Transverse colon (tissue), 4 donors: ENCODE measurements at regions of chr16 and their contacts with region 1.

Region 1: DNA sequence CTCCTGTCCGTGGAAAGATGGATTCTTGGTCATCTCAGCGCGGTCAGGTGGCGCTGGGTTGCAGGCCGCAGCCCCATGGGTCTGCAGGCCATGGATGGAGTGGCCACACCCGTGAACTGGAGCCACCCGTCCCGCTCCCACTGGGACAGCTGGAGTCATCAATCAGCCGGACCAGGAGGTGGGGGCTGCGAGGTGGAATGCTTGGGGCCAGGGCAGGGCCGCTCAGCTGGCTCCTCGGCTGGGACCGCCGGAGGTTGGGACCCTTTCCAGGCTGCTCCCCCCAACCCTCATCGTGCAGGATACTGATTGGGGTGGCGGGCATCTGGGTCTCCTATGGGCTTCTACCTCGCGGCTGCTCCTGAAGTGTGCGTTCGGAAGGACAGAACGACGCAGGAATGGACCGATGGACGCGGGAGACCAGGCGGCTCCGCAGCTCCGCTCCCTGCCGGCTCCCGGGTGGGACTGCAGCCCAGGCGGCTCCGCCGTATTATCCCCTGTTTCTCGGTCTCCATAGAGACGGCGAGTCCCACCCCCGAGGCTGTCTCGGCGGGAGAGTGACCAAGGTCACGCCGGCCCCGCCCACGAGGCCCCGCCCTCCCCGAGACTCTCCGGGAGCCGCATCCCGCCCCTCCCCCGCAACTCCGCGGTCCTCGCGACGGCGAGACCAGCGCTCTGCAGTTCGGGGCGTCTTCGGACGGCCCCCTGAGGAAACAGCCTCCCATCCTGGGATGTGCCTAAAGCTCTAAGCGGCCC is at the start of gene TPPP3:
- DNase-seq: peak; percentile 90
- H3K4me3 ChIP-seq: peak within 1 kb of the TSS in 3 of 4 donors; percentile 11 to 40 (median 31)
- H3K27ac ChIP-seq: peak within 1 kb of the TSS; percentile 64 to 77 (median 74)
- H3K4me1 ChIP-seq: peaks cover 32 to 64% (median 46%) of the 10 kb centered on the region in 4 donors
- H3K27me3 ChIP-seq: no peaks in the 10 kb centered on the region
- CTCF ChIP-seq: peak; percentile 69 to 91 (median 80)
- EP300 ChIP-seq: peak; percentile 36
- POLR2A ChIP-seq: peak; percentile 10
- total RNA-seq, gene TPPP3: 3.5 to 20.9 (median 5.7) TPM in 3 of 4 donors, not detected in the other

Region 2: DNA sequence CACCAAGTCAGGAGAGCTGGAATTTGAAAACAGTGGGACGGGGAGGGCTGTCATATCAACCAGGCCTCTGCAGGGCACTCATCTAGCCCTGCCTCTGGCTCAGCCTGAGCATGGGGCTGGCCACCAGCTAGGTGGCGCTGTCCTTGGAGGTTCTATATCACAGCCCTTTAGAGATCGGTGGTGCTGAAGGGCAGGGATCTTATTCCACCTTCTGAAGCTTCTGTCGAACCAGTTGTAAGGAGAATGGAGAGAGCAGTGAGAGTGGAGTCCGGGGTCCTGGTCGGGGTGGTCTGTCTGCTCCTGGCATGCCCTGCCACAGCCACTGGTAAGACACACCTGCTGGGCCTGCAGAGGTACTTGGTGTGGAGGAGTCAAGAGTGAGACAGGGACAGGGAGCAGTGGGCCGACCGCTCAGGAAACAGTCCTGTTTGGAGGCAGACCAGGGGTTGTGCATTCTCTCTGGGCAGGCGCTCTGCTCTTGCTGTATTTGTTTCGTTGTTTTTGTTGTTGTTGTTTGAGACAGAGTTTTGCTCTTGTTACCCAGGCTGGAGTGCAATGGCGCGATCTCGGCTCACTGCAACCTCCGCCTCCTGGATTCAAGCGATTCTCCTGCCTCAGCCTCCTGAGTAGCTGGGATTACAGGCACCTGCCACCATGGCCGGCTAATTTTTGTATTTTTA is 432.0 kb before region 1 on chr16 and contains the start of gene CES3:
- in situ Hi-C with region 1: loop called in 1 of 4 experiments (anchors 25 kb)
- intact Hi-C with region 1: no loop called
- DNase-seq: peak; percentile 89
- H3K4me3 ChIP-seq: peak within 1 kb of the TSS in 3 of 4 donors; percentile 25 to 45 (median 33)
- H3K27ac ChIP-seq: peak within 1 kb of the TSS; percentile 81 to 88 (median 82)
- H3K4me1 ChIP-seq: peaks cover 0 to 53% (median 31%) of the 10 kb centered on the region in 4 donors
- H3K27me3 ChIP-seq: no peaks in the 10 kb centered on the region
- CTCF ChIP-seq: peak; percentile 58 to 93 (median 78)
- EP300 ChIP-seq: no peak
- POLR2A ChIP-seq: peak; percentile 71
- total RNA-seq, gene CES3: 247 to 616 (median 291) TPM

Region 3: DNA sequence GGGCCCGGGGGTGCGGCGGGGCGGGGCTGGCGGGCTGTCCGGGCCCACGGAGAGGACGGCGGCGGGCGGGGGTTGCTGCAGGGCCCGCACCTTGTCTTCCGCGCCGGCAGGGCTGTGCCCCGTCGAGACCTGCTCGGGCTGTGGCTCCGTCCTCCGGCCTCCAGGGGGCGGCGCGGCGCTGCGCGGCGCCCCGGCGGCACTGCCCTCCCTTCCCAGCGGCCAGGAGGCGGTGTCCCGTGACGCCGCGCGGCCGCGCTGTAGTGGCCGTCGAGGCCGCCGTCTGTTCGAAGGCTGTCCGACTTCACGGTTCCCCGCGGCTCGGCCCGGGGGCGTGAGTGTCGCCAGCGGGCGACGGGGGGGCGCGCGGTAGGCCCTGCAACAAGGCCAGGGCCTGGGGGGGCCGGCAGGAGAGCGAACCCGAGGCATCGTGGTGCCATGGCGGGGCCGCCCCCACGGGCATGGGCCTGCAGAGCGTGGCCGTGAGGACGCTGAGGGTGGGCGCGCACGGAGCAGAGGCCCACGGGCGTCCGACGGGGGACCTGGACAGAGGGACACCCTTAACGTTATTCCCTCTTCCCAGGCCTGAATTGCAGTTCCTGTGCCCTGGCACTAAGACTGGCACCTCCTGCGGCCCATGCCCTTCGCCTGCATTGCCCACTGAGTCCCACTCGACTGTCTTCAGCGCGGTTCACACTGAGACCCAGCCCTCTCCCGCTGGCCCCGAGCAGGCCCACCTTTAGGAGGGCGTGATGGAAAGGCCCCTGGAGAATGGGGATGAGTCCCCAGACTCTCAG is 113.7 kb before region 1 on chr16 and contains the start of gene PLEKHG4:
- in situ Hi-C with region 1: loop called in 1 of 4 experiments (anchors 25 kb)
- intact Hi-C with region 1: loop called (anchors 5 kb)
- DNase-seq: peak; percentile 85
- H3K4me3 ChIP-seq: peak within 1 kb of the TSS; percentile 52 to 78 (median 58)
- H3K27ac ChIP-seq: peak within 1 kb of the TSS; percentile 52 to 78 (median 66)
- H3K4me1 ChIP-seq: peaks cover 0 to 23% (median 21%) of the 10 kb centered on the region in 4 donors
- H3K27me3 ChIP-seq: no peaks in the 10 kb centered on the region
- CTCF ChIP-seq: peak in 4 of 5 experiments; percentile 59 to 84 (median 62)
- EP300 ChIP-seq: no peak
- POLR2A ChIP-seq: no peak
- total RNA-seq, gene PLEKHG4: 0.80 to 12.2 (median 8.7) TPM

Region 4: GRCh38 chr16:67595033-67595355 is 201.8 kb after region 1 on chr16:
- in situ Hi-C with region 1: no loop called
- intact Hi-C with region 1: no loop called
- DNase-seq: no peak
- H3K4me3 ChIP-seq: no peak overlapping the region
- H3K27ac ChIP-seq: no peak overlapping the region
- H3K4me1 ChIP-seq: no peaks in the 10 kb centered on the region
- H3K27me3 ChIP-seq: no peaks in the 10 kb centered on the region
- CTCF ChIP-seq: no peak
- EP300 ChIP-seq: no peak
- POLR2A ChIP-seq: no peak